GM12878 (cell line): ENCODE measurements at regions of chr13 and their contacts with region 1.

Region 1: GRCh38 chr13:20738616-20739015 is 35.1 kb downstream of the IL17D start:
- DNase-seq: no peak
- ATAC-seq: no peak
- H3K4me3 ChIP-seq: no peak overlapping the region
- H3K27ac ChIP-seq: no peak overlapping the region
- H3K4me1 ChIP-seq: no peaks in the 10 kb centered on the region
- H3K27me3 ChIP-seq: no peaks in the 10 kb centered on the region
- CTCF ChIP-seq: no peak
- EP300 ChIP-seq: no peak
- POLR2A ChIP-seq: no peak
- RAD21 ChIP-seq: no peak

Region 2: GRCh38 chr13:20721454-20722357 is 16.9 kb before region 1 on chr13:
- CTCF ChIA-PET with region 1: no interaction called
- POLR2A ChIA-PET with region 1: no interaction called
- RAD21 ChIA-PET with region 1: no interaction called
- SMC1A ChIA-PET with region 1: no interaction called
- in situ Hi-C with region 1: no loop called
- intact Hi-C with region 1: no loop called
- DNase-seq: no peak
- ATAC-seq: no peak
- H3K4me3 ChIP-seq: no peak overlapping the region; the same call in 1 of the 2 replicates
- H3K27ac ChIP-seq: no peak overlapping the region
- H3K4me1 ChIP-seq: no peaks in the 10 kb centered on the region
- H3K27me3 ChIP-seq: peaks cover 0 to 3% of the 10 kb centered on the region in 2 experiments; a peak in 3 of 4 replicates
- CTCF ChIP-seq: no peak
- EP300 ChIP-seq: no peak
- POLR2A ChIP-seq: no peak
- RAD21 ChIP-seq: no peak

Region 3: GRCh38 chr13:20773194-20774080 is 34.8 kb after region 1 on chr13 and contains the start of gene EEF1AKMT1:
- CTCF ChIA-PET with region 1: no interaction called
- POLR2A ChIA-PET with region 1: no interaction called
- RAD21 ChIA-PET with region 1: no interaction called
- SMC1A ChIA-PET with region 1: no interaction called
- in situ Hi-C with region 1: no loop called
- intact Hi-C with region 1: loop called (anchors 1 kb)
- DNase-seq: peak; percentile 79
- ATAC-seq: peak; percentile 95
- H3K4me3 ChIP-seq: peak within 1 kb of the TSS; percentile 64
- H3K27ac ChIP-seq: peak within 1 kb of the TSS; percentile 82
- H3K4me1 ChIP-seq: peaks cover 4% of the 10 kb centered on the region; the same call in 1 of the 2 replicates
- H3K27me3 ChIP-seq: no peaks in the 10 kb centered on the region
- CTCF ChIP-seq: no peak
- EP300 ChIP-seq: no peak
- POLR2A ChIP-seq: peak; percentile 85
- RAD21 ChIP-seq: no peak
- polyA plus RNA-seq, gene EEF1AKMT1: 42.8 to 44.5 TPM

Region 4: DNA sequence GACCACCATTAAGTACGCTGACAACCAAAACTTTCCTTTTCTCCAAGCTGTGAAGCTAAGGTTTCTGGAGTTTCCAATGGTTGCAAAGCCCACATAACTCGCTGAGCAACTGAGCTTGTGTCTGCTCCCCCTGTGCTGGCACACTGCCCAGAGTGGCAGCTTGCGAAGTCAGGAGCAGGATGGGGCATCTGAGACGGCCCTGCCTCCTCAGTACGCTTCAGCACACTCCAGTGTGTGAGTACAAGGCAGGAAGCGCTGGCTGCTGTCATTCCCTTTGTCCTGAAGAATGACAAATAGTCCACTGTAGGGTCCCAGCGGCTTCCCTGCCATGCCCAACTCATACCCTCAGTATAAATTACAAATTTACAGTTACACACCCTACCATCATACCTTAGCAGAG is 386.2 kb after region 1 on chr13:
- CTCF ChIA-PET with region 1: no interaction called
- POLR2A ChIA-PET with region 1: no interaction called
- RAD21 ChIA-PET with region 1: no interaction called
- SMC1A ChIA-PET with region 1: no interaction called
- in situ Hi-C with region 1: no loop called
- intact Hi-C with region 1: no loop called
- DNase-seq: no peak
- ATAC-seq: no peak; the same call in 2 of the 3 replicates
- H3K4me3 ChIP-seq: no peak overlapping the region
- H3K27ac ChIP-seq: no peak overlapping the region
- H3K4me1 ChIP-seq: no peaks in the 10 kb centered on the region
- H3K27me3 ChIP-seq: no peaks in the 10 kb centered on the region
- CTCF ChIP-seq: no peak
- EP300 ChIP-seq: no peak
- POLR2A ChIP-seq: no peak
- RAD21 ChIP-seq: no peak

Region 5: GRCh38 chr13:21137696-21138095 is 399.1 kb after region 1 on chr13:
- CTCF ChIA-PET with region 1: no interaction called
- POLR2A ChIA-PET with region 1: no interaction called
- RAD21 ChIA-PET with region 1: no interaction called
- SMC1A ChIA-PET with region 1: no interaction called
- in situ Hi-C with region 1: no loop called
- intact Hi-C with region 1: no loop called
- DNase-seq: no peak
- ATAC-seq: no peak
- H3K4me3 ChIP-seq: no peak overlapping the region
- H3K27ac ChIP-seq: no peak overlapping the region
- H3K4me1 ChIP-seq: no peaks in the 10 kb centered on the region; the same call in 1 of the 2 replicates
- H3K27me3 ChIP-seq: no peaks in the 10 kb centered on the region
- CTCF ChIP-seq: no peak
- EP300 ChIP-seq: no peak
- POLR2A ChIP-seq: no peak
- RAD21 ChIP-seq: no peak